Ascending aorta (tissue), 2 donors: ENCODE measurements at regions of chr2 and their contacts with region 1.

Region 1: DNA sequence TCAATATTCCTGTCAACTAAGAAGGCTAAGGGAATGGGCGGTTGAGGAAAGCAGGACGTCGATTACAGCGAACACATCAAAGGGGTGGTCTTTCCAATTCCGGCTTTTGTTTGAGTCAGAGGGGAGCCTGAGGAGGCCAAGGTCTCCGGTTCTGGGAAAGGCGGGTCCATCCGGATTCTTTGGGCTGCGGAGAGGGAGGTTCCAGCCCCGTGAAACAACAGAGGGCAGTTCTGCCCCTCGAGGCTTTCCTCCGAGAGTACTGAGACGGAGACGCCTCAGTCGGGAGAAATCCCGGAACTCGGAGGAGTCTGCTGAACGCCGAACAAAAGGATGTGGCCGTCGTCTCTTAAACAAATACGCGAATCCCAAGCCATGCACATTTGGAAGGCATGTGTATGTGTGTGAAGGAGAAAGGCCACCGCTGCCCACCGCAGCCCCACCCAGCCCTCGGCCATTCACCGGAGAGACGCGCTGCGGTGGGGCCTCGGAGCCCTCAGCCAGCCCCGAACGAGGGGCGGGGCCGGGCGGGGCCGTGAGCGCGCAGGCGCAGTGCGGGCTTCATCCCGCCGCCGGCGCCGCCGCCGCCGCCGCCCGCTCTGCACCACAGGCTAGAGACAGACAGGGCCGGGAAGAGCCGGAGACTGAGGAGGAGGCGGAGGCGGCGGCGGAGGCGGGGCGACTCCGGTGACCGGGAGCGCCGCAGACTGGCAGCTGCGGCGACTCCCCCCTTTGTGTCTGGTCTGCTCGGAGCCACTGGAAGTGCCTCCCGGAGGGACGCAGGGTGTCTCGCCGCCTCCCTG is at the start of gene BMPR2:
- DNase-seq: peak; percentile 75 to 93
- H3K4me3 ChIP-seq: peak within 1 kb of the TSS; percentile 97 to 98
- H3K27ac ChIP-seq: peak within 1 kb of the TSS; percentile 98 to 100
- H3K4me1 ChIP-seq: peaks cover 0 to 8% of the 10 kb centered on the region in 2 donors
- H3K27me3 ChIP-seq: no peaks in the 10 kb centered on the region
- CTCF ChIP-seq: no peak
- total RNA-seq, gene BMPR2: 47.8 TPM

Region 2: DNA sequence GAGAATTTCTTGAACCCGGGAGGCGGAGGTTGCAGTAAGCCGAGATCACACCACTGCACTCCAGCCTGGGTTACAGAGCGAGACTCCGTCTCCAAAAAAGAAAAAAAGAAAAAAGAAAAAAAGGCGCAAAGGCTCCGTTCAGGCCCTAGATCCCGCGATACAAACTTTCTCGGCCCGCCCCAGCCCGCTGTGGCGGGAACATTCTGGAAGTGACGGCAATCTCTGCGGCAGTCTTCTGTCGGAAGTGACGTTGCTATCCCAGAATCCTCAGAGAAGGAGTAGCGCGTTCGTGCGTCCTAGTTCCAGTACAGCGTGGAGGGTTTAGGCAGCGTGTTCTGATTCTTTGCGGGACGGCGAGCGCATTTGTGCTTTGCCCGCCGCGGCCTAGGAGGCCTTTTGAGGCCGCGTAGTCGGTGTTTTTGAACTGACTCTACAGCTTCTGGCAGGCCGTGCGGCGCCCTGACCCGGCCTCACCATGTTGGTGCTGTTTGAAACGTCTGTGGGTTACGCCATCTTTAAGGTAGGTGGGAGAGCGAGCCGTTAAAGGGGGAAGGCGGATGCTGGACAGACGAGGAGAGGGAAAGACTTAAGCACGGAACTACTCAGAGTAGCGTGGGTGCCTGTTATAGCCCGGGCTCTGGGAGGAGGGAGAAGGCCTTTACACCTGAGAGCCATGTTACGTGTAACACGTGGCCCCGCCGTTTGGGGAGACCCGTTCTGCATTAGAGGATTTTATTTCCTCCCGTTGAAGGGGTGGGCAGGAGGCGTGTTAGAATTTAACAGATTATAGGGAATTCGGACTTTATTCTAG is 110.1 kb before region 1 on chr2 and contains the start of gene NOP58:
- intact Hi-C with region 1: loop called (anchors 1 kb)
- DNase-seq: peak; percentile 74 to 97
- H3K4me3 ChIP-seq: peak within 1 kb of the TSS; percentile 96 to 97
- H3K27ac ChIP-seq: peak within 1 kb of the TSS; percentile 94 to 97
- H3K4me1 ChIP-seq: peaks cover 0 to 9% of the 10 kb centered on the region in 2 donors
- H3K27me3 ChIP-seq: no peaks in the 10 kb centered on the region
- CTCF ChIP-seq: no peak
- total RNA-seq, gene NOP58: 65.8 TPM

Region 3: DNA sequence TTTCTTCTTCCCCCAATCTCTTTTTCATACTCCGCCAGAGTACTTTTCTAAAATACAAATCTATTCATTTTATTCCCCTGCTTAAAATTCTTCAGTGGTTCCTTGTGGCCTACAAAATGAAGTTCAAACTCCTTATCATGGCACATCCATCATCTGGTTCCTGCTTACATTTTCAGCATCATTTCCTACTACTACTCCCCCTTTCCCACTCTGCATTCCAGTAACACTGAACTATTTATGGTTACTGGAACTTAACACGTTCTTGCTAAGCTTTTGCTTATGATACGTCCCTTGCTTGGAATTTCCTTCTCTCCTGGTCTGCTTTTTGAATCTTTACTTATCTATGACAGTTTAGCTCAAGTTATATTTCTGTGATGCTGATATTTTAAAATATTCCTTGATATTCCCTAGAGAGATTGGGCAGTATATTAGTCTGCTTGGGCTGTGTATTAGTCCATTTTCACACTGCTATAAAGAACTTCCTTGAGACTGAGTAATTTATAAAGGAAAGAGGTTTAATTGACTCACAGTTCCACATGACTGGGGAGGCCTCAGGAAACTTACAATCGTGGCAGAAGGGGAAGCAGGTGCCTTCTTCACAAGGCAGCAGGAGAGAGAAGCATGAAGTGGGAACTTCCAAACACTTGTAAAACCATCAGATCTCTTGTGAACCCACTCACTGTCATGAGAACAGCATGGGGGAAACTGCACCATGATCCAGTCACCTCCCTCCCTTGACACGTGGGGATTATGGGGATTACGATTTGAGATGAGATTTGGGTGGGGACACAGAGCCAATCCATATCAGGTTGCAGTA is 53.6 kb after region 1 on chr2:
- intact Hi-C with region 1: loop called (anchors 2 kb)
- DNase-seq: no peak
- H3K4me3 ChIP-seq: peak overlapping the region in 1 of 2 donors; percentile 1
- H3K27ac ChIP-seq: peak overlapping the region; percentile 92 to 94
- H3K4me1 ChIP-seq: peaks cover 3 to 47% of the 10 kb centered on the region in 2 donors
- H3K27me3 ChIP-seq: no peaks in the 10 kb centered on the region
- CTCF ChIP-seq: no peak

Region 4: GRCh38 chr2:202508686-202509085 is 132.9 kb after region 1 on chr2:
- intact Hi-C with region 1: loop called (anchors 5 kb)
- DNase-seq: no peak
- H3K4me3 ChIP-seq: no peak overlapping the region
- H3K27ac ChIP-seq: peak overlapping the region in 1 of 2 donors; percentile 19
- H3K4me1 ChIP-seq: peaks cover 0 to 6% of the 10 kb centered on the region in 2 donors
- H3K27me3 ChIP-seq: no peaks in the 10 kb centered on the region
- CTCF ChIP-seq: no peak

Region 5: GRCh38 chr2:202541137-202541536 is 165.3 kb after region 1 on chr2:
- intact Hi-C with region 1: loop called (anchors 10 kb)
- DNase-seq: no peak
- H3K4me3 ChIP-seq: no peak overlapping the region
- H3K27ac ChIP-seq: peak overlapping the region; percentile 35 to 54
- H3K4me1 ChIP-seq: peaks cover 4 to 11% of the 10 kb centered on the region in 2 donors
- H3K27me3 ChIP-seq: no peaks in the 10 kb centered on the region
- CTCF ChIP-seq: no peak

Region 6: GRCh38 chr2:202911512-202912341 is 535.9 kb after region 1 on chr2 and contains the starts of genes CARF and WDR12:
- intact Hi-C with region 1: loop called (anchors 2 kb)
- DNase-seq: peak; percentile 61 to 95
- H3K4me3 ChIP-seq: peak within 1 kb of the TSS; percentile 64 to 69
- H3K27ac ChIP-seq: peak within 1 kb of the TSS; percentile 82
- H3K4me1 ChIP-seq: peaks cover 0 to 11% of the 10 kb centered on the region in 2 donors
- H3K27me3 ChIP-seq: no peaks in the 10 kb centered on the region
- CTCF ChIP-seq: no peak
- total RNA-seq, gene CARF: 26.2 TPM
- total RNA-seq, gene WDR12: 2.1 TPM

Region 7: DNA sequence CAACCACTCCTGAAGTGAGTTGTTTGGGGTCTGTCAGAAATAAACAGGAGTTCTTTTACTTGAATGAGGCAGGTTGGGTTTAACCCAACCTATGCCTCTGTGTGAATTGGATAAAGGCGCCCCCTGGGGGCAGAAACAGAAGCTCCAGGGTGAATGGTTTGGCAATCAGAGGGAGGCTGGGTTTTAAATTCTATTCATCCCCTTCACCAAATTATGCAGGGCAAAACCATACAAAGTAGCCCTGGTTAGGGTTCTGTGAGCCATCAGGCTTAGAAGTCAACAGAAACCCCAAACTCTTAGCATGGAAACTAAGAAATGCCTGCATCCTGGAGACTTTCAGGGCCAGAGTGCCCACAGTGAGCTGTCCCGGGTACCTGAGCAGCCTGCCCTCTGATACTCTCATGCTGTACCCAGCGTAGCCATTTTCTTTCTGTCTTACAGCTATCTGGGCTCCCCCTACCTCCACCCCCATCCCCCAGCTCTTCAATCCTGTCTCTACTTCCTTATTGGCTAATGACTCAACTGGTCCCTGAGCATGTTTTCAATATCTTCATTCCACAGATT is 1802.2 kb after region 1 on chr2:
- intact Hi-C with region 1: no loop called
- DNase-seq: no peak
- H3K4me3 ChIP-seq: no peak overlapping the region
- H3K27ac ChIP-seq: no peak overlapping the region
- H3K4me1 ChIP-seq: no peaks in the 10 kb centered on the region
- H3K27me3 ChIP-seq: no peaks in the 10 kb centered on the region
- CTCF ChIP-seq: peak in 2 of 3 experiments; percentile 26 to 39